ENCODE measurements at regions of chr14 and their contacts with region 1.

Region 1: DNA sequence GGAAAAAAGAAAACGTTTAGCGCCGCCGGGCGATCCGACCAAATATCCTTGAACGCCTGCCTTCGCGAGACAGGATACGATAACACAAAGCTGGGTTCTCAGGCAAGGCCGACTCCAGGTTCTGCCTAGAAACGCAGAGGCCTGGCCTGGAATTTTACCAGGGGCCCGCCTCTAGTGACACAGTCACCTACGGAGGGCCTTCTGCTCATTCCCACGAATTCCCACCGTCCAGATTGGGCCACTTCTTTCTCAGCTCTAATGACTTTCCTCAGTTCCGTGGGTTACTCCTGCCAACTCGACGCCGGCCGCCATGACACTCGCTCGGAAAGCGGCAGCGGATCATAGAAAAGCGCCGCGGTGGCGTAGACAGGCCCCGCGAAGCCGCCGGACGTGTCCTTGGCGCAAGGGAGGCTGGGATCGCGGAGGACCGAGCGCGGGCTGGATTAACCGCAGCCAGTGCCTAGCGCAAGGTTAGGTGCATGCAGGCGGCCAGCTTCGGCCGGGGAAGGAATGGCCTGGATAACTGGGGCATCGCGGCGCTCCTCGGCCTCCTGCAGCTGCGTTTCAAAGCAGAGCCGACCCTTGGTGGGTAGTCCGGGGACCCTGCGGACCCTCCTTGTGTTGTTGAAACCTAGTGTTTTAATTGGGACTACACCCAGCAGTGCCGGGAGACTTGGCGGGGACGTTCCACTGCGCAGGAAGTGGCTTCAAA is at the start of gene TRIP11:
- DNase-seq: peak; percentile 98
- H3K4me3 Mint-ChIP-seq: peak within 1 kb of the TSS; percentile 89
- H3K27ac Mint-ChIP-seq: peak within 1 kb of the TSS; percentile 95
- H3K4me1 Mint-ChIP-seq: peaks cover 46% of the 10 kb centered on the region
- H3K27me3 Mint-ChIP-seq: no peaks in the 10 kb centered on the region
- total RNA-seq, gene TRIP11: 44.4 to 46.0 TPM

Region 2: DNA sequence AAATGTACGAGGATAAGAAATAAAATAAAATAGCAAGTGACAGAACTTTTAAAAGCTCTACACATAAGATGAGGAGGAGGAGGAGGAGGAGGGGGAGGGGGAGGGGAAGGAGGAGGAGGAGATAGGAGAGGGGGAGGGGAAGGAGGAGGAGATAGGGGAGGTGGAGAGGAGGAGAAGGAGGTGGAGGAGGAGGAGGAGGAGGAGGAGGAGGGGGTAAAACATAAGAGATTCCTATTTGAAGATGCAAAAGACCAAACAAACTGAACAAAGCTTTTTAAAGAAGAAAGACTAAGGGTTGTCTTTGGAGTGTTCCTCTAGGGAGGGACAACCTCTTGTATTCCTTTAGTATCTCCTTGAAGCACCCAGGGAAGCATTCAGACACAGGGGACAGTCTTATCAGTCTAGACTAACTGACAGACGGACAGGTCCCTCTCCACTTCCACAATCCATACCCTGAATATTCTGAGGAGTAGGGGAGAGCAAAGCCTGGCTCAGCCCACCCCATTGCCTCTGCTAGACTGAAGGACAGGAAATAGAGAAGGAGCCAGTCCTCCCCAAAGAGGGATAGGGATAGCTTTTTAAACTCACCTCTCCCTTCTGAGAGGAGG is 185.4 kb before region 1 on chr14:
- CTCF ChIA-PET with region 1: no interaction called
- POLR2A ChIA-PET with region 1: no interaction called
- DNase-seq: no peak
- H3K4me3 Mint-ChIP-seq: no peak overlapping the region
- H3K27ac Mint-ChIP-seq: no peak overlapping the region
- H3K4me1 Mint-ChIP-seq: peaks cover 45% of the 10 kb centered on the region
- H3K27me3 Mint-ChIP-seq: no peaks in the 10 kb centered on the region

Region 3: GRCh38 chr14:91866061-91866460 is 173.8 kb before region 1 on chr14:
- CTCF ChIA-PET with region 1: no interaction called
- POLR2A ChIA-PET with region 1: interaction called, 19 read pairs
- DNase-seq: peak; percentile 53
- H3K4me3 Mint-ChIP-seq: peak overlapping the region; percentile 94
- H3K27ac Mint-ChIP-seq: peak overlapping the region; percentile 95
- H3K4me1 Mint-ChIP-seq: peaks cover 77% of the 10 kb centered on the region
- H3K27me3 Mint-ChIP-seq: no peaks in the 10 kb centered on the region

Region 4: DNA sequence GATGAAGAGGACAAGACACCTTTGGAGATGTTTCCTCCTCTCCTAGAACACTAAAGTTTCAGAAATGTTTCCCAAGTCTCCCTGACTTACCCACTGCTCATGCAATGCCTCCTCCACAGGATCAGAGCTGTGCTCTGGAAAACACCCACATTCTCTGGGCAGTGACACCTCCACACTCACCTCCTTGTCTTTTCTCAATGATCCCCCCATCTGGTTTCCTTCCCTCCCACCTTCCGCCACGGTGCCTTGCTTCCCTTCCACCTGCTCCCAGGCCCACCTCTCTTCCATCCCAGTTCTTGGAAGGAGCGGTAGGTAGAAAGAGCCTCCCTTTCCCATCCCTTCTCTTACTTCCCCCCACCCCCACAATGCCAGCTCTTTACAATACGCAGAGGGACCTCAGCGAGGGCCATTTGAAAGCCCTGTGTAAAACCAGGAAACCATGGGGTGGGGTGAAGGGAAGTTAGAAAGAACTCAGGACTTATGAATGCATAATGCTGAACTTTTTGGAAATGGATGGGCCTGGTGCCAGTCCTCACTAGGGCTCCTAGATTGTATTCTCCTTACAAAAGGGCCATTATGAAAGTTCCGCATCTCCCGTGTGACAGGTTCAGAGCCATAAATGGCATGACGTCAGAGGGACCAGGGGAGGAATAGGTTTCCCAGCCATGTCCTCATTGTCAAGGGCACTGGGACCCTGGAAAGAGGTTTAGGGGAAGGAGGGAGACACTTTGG is 105.2 kb before region 1 on chr14:
- CTCF ChIA-PET with region 1: no interaction called
- POLR2A ChIA-PET with region 1: no interaction called
- DNase-seq: no peak
- H3K4me3 Mint-ChIP-seq: no peak overlapping the region
- H3K27ac Mint-ChIP-seq: no peak overlapping the region
- H3K4me1 Mint-ChIP-seq: no peaks in the 10 kb centered on the region
- H3K27me3 Mint-ChIP-seq: no peaks in the 10 kb centered on the region

Region 5: DNA sequence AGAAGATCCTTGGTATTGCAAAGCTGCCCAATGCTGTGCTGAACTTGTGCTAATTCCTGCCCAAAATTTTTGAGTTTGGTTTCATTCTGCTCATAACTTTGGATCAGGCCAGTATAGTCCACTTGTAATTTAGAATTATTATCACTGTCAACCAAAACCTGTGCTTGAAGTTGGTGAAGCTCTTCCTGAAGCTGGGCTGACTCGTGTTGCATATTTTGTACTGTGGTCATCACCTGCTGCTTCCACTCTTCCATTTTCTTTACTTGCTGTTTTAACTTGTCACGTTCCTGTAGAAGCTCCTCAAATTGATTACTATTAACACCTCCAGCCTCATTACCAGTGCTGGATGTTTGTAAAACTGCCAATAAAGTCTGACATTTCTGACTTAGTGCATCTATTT is 35.8 kb before region 1 on chr14:
- CTCF ChIA-PET with region 1: no interaction called
- POLR2A ChIA-PET with region 1: interaction called, 22 read pairs
- DNase-seq: no peak
- H3K4me3 Mint-ChIP-seq: no peak overlapping the region
- H3K27ac Mint-ChIP-seq: no peak overlapping the region
- H3K4me1 Mint-ChIP-seq: peaks cover 36% of the 10 kb centered on the region
- H3K27me3 Mint-ChIP-seq: no peaks in the 10 kb centered on the region

Region 6: DNA sequence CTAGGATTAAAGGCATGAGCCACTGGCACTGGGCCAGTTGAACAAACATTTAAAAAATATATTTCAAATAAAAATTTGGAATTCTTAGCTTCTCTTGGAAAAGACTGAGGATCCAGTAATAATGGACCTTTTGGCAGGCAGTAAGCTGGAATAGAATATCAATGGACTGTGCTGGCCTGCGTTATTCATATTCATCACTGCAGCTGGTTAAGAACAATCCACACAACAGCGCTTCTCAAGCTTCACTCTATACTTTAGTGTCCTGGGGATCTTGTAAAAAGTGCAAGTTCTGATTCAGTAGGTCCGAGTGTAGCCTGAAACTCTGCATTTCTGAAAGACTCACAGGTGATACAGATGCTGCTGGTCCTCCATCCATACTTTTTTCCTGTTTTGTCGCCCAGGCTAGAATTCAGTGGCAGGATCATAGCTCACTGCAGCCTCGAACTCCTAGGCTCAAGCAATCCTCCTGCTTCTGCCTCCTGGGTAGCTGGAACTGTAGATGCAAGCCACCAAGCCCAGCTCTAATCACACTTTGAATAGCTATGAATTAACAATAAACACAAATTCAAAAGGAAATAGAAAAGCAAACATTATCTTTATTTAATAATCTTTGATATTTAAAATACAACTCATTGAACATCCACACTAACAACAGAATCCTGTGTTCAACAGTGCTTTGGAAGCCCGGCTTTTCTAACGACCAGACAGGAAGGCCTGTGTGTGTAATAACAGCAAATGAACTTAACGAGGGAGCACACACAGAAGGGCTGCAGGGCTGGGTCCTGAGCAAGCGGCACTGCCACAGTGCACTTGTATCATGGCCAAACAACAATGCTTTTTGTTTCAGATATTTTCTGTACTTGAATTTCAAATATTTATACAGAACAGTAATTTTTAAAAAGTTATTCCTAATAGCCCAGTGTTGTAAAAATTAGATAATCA is 18.4 kb after region 1 on chr14:
- CTCF ChIA-PET with region 1: interaction called, 3 read pairs
- POLR2A ChIA-PET with region 1: interaction called, 14 read pairs
- DNase-seq: no peak
- H3K4me3 Mint-ChIP-seq: no peak overlapping the region
- H3K27ac Mint-ChIP-seq: no peak overlapping the region
- H3K4me1 Mint-ChIP-seq: no peaks in the 10 kb centered on the region
- H3K27me3 Mint-ChIP-seq: no peaks in the 10 kb centered on the region

Region 7: GRCh38 chr14:92121670-92122350 is 81.9 kb after region 1 on chr14 and contains the starts of genes CPSF2 and NDUFB1:
- CTCF ChIA-PET with region 1: interaction called, 15 read pairs
- POLR2A ChIA-PET with region 1: interaction called, 70 read pairs
- DNase-seq: peak; percentile 86
- H3K4me3 Mint-ChIP-seq: peak within 1 kb of the TSS; percentile 85
- H3K27ac Mint-ChIP-seq: peak within 1 kb of the TSS; percentile 97
- H3K4me1 Mint-ChIP-seq: peaks cover 50% of the 10 kb centered on the region
- H3K27me3 Mint-ChIP-seq: no peaks in the 10 kb centered on the region
- total RNA-seq, gene CPSF2: 74.5 to 79.3 TPM
- total RNA-seq, gene NDUFB1: 136 to 140 TPM

Region 8: GRCh38 chr14:92173668-92174067 is 133.8 kb after region 1 on chr14:
- CTCF ChIA-PET with region 1: no interaction called
- POLR2A ChIA-PET with region 1: no interaction called
- DNase-seq: no peak
- H3K4me3 Mint-ChIP-seq: no peak overlapping the region
- H3K27ac Mint-ChIP-seq: no peak overlapping the region
- H3K4me1 Mint-ChIP-seq: no peaks in the 10 kb centered on the region
- H3K27me3 Mint-ChIP-seq: no peaks in the 10 kb centered on the region

Measured in activated CD4-positive, alpha-beta memory T cell treated with anti-CD3 and anti-CD28 coated beads, Interleukin-2, amount 10 ng/mL, durations not matched to agents 7 days and 5 days (primary cell).